AG04450 (cell line): ENCODE measurements at regions of chr2 and their contacts with region 1.

Region 1: DNA sequence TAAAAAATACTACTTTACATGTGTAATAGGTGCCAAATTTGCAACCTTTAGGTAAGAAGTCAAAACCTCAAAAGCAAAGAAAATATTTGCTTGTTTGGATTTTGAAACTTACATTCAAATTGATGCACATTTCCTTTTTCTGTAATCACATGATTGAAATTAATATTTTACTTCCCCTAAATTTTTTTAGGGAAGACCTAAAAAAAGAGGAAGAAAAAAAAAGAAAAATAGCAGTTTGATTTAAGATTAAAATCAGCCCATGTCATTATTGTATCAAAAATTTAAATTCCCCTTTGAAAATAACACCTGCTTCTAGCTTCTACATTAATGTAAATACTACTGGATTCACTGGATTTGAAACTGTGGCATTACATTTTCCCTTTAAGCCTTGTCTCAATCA is 68.2 kb upstream of the STON1 start:
- DNase-seq: no peak
- H3K4me3 ChIP-seq: no peak overlapping the region
- H3K27ac ChIP-seq: no peak overlapping the region
- H3K27me3 ChIP-seq: no peaks in the 10 kb centered on the region
- CTCF ChIP-seq: no peak

Region 2: DNA sequence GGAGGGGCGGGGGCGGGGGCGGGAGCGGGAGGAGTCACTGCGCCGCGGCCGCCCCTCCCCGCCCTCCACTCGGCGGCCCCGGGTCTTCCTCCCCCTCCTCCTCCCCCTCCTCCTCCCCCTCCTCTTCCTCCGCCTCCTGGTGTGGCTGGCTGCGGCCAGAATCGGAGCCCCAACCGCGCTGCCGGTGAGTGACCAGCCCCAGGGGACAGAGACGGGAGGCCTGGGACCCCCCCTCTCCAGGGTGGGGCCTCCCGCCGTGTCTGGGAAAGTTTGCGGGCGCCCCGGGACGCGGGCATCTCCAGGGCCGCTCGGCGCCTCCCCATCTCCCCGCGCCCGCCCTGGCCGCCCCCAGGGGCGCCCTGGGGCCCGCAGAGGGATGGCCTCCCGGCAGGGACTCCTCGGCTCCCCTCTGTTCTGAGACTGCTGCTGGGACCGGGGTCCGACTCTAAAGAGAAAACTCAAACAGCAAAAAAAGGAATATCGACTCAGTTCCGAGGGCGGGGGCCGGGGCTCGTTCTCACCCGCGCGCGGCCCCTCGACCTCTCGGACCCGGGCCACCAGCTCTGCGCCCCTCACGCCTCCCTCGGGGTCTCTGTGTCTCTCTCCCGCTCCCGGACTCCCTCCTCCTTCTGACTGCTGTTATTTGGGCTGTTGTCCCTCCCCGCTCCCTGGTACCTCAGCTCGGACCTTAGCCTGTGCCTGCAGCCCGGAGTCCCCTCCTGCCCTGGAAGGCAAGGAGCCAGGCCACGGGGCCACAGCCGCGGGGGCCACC is 68.5 kb after region 1 on chr2 and contains the start of gene STON1:
- CTCF ChIA-PET with region 1: no interaction called
- POLR2A ChIA-PET with region 1: interaction called, 10 read pairs
- DNase-seq: no peak
- H3K4me3 ChIP-seq: peak within 1 kb of the TSS; percentile 84
- H3K27ac ChIP-seq: peak within 1 kb of the TSS; percentile 11
- H3K27me3 ChIP-seq: no peaks in the 10 kb centered on the region
- CTCF ChIP-seq: peak; percentile 20; the same call in 1 of the 2 replicates
- polyA plus RNA-seq, gene STON1: 13.5 and 17.8 TPM in 2 replicates

Region 3: GRCh38 chr2:48607307-48608014 is 145.7 kb after region 1 on chr2:
- CTCF ChIA-PET with region 1: no interaction called
- POLR2A ChIA-PET with region 1: no interaction called
- DNase-seq: no peak
- H3K4me3 ChIP-seq: no peak overlapping the region
- H3K27ac ChIP-seq: no peak overlapping the region
- H3K27me3 ChIP-seq: peaks cover 3% of the 10 kb centered on the region
- CTCF ChIP-seq: 0 out of 2 replicates have a peak, but pooled peaks have one; percentile 1